PC-3 (cell line): ENCODE measurements at regions of chr15 and their contacts with region 1.

Region 1: GRCh38 chr15:48868536-48868935 is 9.4 kb upstream of the EID1 start:
- DNase-seq: peak; percentile 77
- ATAC-seq: peak; percentile 70
- H3K4me3 ChIP-seq: no peak overlapping the region
- H3K27ac ChIP-seq: peak overlapping the region; percentile 80
- H3K4me1 ChIP-seq: peaks cover 40% of the 10 kb centered on the region
- H3K27me3 ChIP-seq: no peaks in the 10 kb centered on the region
- CTCF ChIP-seq: no peak

Region 2: DNA sequence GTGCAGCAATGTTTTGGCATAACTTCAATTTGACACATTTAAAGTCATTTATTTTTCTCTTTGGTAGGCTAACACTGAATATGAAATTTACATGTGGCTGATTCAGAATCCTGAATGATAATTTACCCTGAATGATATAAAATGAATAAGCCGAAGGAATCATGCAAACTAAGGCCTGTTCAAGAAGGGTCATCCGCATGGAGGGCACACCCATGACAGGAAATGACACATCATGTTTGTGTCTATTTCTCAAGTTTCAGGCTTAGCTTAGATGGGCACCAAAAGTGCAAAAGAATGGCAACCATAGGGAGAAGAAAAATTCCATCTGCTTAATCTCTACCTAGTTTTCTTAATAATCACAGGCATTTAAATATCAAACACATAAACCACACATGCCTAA is 395.8 kb before region 1 on chr15:
- CTCF ChIA-PET with region 1: no interaction called
- POLR2A ChIA-PET with region 1: no interaction called
- intact Hi-C with region 1: no loop called
- DNase-seq: peak; percentile 53
- ATAC-seq: peak; percentile 82
- H3K4me3 ChIP-seq: no peak overlapping the region
- H3K27ac ChIP-seq: peak overlapping the region; percentile 71
- H3K4me1 ChIP-seq: peaks cover 14% of the 10 kb centered on the region
- H3K27me3 ChIP-seq: no peaks in the 10 kb centered on the region
- CTCF ChIP-seq: no peak

Region 3: GRCh38 chr15:48905847-48906246 is 37.3 kb after region 1 on chr15:
- CTCF ChIA-PET with region 1: no interaction called
- POLR2A ChIA-PET with region 1: no interaction called
- intact Hi-C with region 1: loop called (anchors 5 kb)
- DNase-seq: no peak
- ATAC-seq: no peak
- H3K4me3 ChIP-seq: no peak overlapping the region
- H3K27ac ChIP-seq: no peak overlapping the region
- H3K4me1 ChIP-seq: peaks cover 7% of the 10 kb centered on the region
- H3K27me3 ChIP-seq: no peaks in the 10 kb centered on the region
- CTCF ChIP-seq: no peak

Region 4: GRCh38 chr15:48963524-48964113 is 95.1 kb after region 1 on chr15 and contains the start of gene SHC4:
- CTCF ChIA-PET with region 1: interaction called, 3 read pairs
- POLR2A ChIA-PET with region 1: interaction called, 3 read pairs
- intact Hi-C with region 1: loop called (anchors 1 kb)
- DNase-seq: peak; percentile 75
- ATAC-seq: peak; percentile 48
- H3K4me3 ChIP-seq: peak within 1 kb of the TSS; percentile 81
- H3K27ac ChIP-seq: peak within 1 kb of the TSS; percentile 89
- H3K4me1 ChIP-seq: peaks cover 34% of the 10 kb centered on the region
- H3K27me3 ChIP-seq: no peaks in the 10 kb centered on the region
- CTCF ChIP-seq: peak; percentile 47
- total RNA-seq, gene SHC4: 2.4 and 4.3 TPM in 2 replicates